Dorsolateral prefrontal cortex (tissue), 120 donors: ENCODE measurements at regions of chr10 and their contacts with region 1.

Region 1: DNA sequence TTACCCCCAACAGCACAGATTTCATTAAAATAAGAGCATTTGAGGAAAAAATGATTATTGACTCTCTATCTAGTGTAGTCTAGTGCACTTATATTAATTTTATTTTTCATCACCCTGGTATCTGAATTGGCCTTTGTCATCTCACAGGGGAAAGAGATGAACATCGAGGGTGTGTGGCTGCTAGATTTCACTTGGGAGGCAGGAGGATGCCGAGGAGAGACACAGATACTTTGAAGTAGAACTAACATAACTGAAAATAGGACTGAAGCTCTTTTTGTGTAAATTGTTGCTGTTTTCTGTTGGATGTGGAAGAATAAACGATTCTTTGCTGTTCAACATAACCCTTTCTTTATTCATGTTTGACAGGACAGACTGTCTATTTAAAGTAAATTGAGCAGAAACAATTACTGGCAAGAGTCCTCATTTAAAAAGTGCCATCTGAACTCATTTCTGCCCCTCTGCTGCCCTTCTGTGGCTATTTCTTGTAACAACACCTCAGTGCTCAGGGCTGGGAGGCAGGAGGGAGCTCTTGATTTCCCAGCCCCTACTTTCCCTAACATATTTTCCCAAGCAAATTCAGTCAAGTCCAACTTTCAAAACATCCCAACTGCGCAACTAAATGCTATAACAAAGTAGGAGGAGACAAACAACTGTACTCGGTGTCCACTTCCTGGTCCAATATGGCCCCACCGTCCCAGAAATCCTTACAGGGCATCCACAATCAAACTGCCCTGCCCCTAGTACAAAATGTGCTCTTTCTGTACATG is 15.6 kb downstream of the LYZL1 start:
- DNase-seq: peak in 9 of 10 donors; percentile 13 to 73 (median 59)
- H3K4me3 ChIP-seq: peak overlapping the region in 22 of 59 donors; percentile 1 to 46 (median 20)
- H3K27ac ChIP-seq: peak overlapping the region in 48 of 59 donors; percentile 1 to 79 (median 54)
- H3K27me3 ChIP-seq: peaks cover 0 to 8% (median 0%) of the 10 kb centered on the region in 45 donors
- CTCF ChIP-seq: peak; percentile 80 to 99 (median 92)

Region 2: DNA sequence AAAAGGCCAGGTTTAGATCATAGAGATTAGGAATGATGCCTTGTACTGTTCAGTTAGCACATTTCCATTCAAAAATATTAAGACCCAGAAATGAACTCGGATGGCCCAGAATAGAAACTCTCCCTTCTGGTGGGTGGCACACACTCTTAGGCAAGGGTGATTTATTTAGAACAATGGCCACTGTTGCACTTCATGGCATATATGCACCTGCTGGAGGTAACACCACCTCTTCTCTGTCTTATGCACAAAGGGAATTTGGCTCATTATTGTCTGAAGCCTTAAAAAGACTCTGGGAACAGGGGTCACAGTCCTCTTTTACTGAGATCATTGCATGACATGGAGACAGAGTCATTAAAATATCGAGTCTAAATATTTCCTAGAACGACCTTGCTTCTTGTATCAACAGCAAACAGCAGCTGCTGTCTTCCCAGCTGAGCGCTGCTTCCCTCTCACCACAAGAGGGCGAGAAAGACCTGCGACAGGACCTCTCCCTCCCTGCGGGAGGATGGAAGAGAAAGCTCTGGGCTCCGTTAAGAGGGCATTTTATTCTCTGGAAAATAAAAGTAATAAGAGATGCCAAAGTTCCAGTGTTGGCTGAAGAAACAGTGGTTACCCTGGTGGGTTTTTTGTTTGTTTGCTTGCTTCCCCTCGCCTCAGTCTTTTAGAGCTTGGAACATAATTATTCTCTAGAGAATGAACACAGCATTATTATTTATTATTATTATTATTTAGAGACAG is 640.7 kb before region 1 on chr10:
- intact Hi-C with region 1: loop called in 1 of 2 experiments (anchors 5 kb)
- DNase-seq: peak; percentile 59 to 89 (median 81)
- H3K4me3 ChIP-seq: no peak overlapping the region
- H3K27ac ChIP-seq: peak overlapping the region in 1 of 59 donors; percentile 53
- H3K27me3 ChIP-seq: peaks cover 0 to 24% (median 14%) of the 10 kb centered on the region in 45 donors
- CTCF ChIP-seq: peak; percentile 69 to 99 (median 97)

Region 3: DNA sequence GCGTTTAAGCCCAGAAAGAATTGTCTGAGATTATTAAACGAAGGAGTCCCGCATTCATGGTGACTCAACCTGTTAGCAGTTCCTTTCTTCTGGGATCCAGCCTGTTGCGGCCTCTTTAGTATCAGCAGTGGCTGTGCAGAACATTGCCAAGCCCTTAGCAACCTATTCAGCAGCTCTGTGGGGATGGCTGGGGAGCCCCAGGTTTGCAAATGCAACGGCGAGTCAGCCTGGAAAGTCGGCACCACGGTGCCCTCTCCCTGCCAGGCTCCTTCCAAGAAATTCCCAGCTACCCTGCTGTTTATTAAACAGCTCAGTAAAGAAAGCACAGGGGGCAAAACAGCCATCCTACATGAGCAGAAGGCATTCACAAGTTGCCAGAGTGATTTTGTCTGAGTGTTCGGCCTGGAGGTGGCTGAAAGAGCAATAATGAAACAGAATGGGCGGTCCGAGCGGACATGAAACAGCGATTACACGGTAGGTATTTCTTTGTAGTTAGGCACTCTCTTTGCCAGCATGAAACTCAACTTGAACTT is 428.8 kb before region 1 on chr10:
- intact Hi-C with region 1: loop called in 1 of 2 experiments (anchors 10 kb)
- DNase-seq: peak in 6 of 10 donors; percentile 20 to 55 (median 36)
- H3K4me3 ChIP-seq: peak overlapping the region in 16 of 59 donors; percentile 1 to 35 (median 16)
- H3K27ac ChIP-seq: no peak overlapping the region
- H3K27me3 ChIP-seq: peaks cover 0 to 4% (median 0%) of the 10 kb centered on the region in 45 donors
- CTCF ChIP-seq: peak in 5 of 56 donors; percentile 8 to 42 (median 21)

Region 4: DNA sequence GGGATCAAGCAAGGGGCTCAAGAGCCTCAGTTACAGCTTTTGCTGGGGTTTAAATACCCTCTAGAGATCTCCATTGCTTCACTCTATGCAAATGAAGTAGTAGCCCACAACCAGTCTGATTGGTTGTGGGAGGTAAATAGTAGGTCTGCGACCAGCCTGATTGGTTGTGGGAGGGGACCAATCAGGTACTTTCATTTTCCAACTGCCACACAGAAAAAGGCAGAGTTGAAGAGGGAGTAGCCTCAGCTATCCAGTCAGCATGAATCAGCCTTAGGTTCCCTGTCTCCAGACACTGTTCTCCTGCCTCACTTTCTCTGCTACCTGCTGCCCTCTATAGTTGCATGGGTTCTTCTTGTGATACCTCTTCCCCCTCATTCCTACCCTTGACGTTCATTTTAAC is 130.1 kb before region 1 on chr10:
- intact Hi-C with region 1: no loop called
- DNase-seq: no peak
- H3K4me3 ChIP-seq: no peak overlapping the region
- H3K27ac ChIP-seq: no peak overlapping the region
- H3K27me3 ChIP-seq: peaks cover 0 to 22% (median 0%) of the 10 kb centered on the region in 45 donors
- CTCF ChIP-seq: no peak

Region 5: GRCh38 chr10:29239569-29240472 is 64.6 kb before region 1 on chr10:
- intact Hi-C with region 1: loop called in 1 of 2 experiments (anchors 2 kb)
- DNase-seq: no peak
- H3K4me3 ChIP-seq: no peak overlapping the region
- H3K27ac ChIP-seq: no peak overlapping the region
- H3K27me3 ChIP-seq: peaks cover 0 to 3% (median 0%) of the 10 kb centered on the region in 45 donors
- CTCF ChIP-seq: peak in 36 of 56 donors; percentile 7 to 63 (median 31)